GM10248 (cell line): ENCODE measurements at regions of chr1 and their contacts with region 1.

Region 1: DNA sequence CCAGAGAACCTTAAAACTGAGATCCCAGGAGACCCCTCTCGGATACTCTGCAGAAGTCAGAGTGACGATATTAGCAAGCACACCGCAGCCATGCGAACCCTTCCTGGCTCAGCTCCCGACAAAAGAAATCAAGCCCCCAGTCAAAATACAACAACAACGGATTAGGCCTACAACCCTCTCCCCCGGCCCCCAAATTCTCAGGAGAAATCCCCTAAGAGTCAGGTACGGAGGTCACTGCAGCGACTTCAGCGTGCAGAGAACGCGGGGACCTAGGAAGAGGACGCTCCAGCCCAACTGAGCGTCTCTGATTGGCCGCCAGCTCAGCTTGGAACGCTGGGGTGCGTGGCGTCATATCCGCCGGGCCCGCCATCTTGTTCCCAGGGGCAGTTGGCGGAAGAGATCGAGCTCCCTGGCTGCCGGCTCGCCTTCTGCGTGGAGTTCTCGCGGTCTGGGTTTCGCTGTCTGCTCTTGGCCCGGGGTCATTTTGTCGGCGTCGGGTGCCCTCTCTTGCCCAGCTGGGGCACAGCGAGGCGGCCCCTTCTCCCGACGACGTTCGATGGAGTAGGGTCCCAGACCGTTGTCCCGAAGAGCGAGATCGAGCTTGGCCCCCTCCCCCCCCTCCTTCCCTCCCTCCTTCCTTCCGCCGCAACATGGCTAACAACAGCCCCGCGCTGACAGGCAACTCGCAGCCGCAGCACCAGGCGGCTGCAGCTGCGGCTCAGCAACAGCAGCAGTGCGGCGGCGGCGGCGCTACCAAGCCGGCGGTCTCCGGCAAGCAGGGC is at the start of gene PRPF38B:
- DNase-seq: peak; percentile 96
- CTCF ChIP-seq: no peak

Region 2: GRCh38 chr1:107804134-107804533 is 888.0 kb before region 1 on chr1:
- CTCF ChIA-PET with region 1: no interaction called
- POLR2A ChIA-PET with region 1: no interaction called
- DNase-seq: no peak
- CTCF ChIP-seq: no peak

Region 3: GRCh38 chr1:108521990-108522393 is 170.1 kb before region 1 on chr1:
- CTCF ChIA-PET with region 1: no interaction called
- POLR2A ChIA-PET with region 1: no interaction called
- DNase-seq: no peak
- CTCF ChIP-seq: no peak

Region 4: DNA sequence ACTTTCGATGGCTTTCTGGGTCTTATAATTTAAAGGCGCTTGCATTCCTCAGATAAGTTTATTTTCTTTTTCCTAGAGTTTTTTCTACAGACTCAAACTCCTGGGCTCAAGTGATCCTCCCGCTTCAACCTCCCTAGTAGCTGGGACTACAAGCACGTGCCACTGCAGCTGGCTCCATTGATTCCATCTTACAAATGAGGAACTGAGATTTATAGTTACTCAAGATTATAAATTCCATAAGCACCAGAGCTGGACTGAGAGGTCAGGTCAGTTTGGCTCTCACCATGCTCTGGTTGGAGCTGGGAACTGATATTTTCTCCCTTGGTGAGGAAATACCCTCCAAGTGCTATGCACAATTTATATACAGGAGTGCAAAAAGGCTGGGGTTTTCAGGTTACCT is 13.4 kb before region 1 on chr1:
- CTCF ChIA-PET with region 1: interaction called, 11 read pairs
- POLR2A ChIA-PET with region 1: interaction called, 3 read pairs
- DNase-seq: no peak
- CTCF ChIP-seq: no peak

Region 5: GRCh38 chr1:108708691-108709660 is 16.8 kb after region 1 on chr1:
- CTCF ChIA-PET with region 1: interaction called, 10 read pairs
- POLR2A ChIA-PET with region 1: interaction called, 3 read pairs
- DNase-seq: no peak
- CTCF ChIP-seq: peak; percentile 23

Region 6: GRCh38 chr1:108719656-108720435 is 27.7 kb after region 1 on chr1:
- CTCF ChIA-PET with region 1: no interaction called
- POLR2A ChIA-PET with region 1: no interaction called
- DNase-seq: no peak
- CTCF ChIP-seq: no peak

Region 7: GRCh38 chr1:109248797-109249642 is 556.9 kb after region 1 on chr1 and contains the start of gene CELSR2:
- CTCF ChIA-PET with region 1: no interaction called
- POLR2A ChIA-PET with region 1: no interaction called
- DNase-seq: peak; percentile 88
- CTCF ChIP-seq: no peak